ENCODE measurements at regions of chr3 and their contacts with region 1.

Region 1: GRCh38 chr3:23402728-23403492 is 199.8 kb downstream of the UBE2E2 start:
- DNase-seq: no peak
- H3K4me3 ChIP-seq: no peak overlapping the region
- H3K27ac ChIP-seq: no peak overlapping the region
- H3K4me1 ChIP-seq: no peaks in the 10 kb centered on the region
- H3K27me3 ChIP-seq: no peaks in the 10 kb centered on the region
- CTCF ChIP-seq: no peak

Region 2: GRCh38 chr3:23288286-23288685 is 114.6 kb before region 1 on chr3:
- CTCF ChIA-PET with region 1: no interaction called
- dilution Hi-C with region 1: no loop called
- in situ Hi-C with region 1: no loop called
- intact Hi-C with region 1: no loop called
- DNase-seq: peak; percentile 6
- H3K4me3 ChIP-seq: no peak overlapping the region
- H3K27ac ChIP-seq: no peak overlapping the region
- H3K4me1 ChIP-seq: no peaks in the 10 kb centered on the region
- H3K27me3 ChIP-seq: no peaks in the 10 kb centered on the region
- CTCF ChIP-seq: no peak

Region 3: GRCh38 chr3:23435318-23435717 is 32.4 kb after region 1 on chr3:
- CTCF ChIA-PET with region 1: no interaction called
- dilution Hi-C with region 1: loop called (anchors 5 kb)
- in situ Hi-C with region 1: no loop called
- intact Hi-C with region 1: no loop called
- DNase-seq: no peak
- H3K4me3 ChIP-seq: no peak overlapping the region
- H3K27ac ChIP-seq: no peak overlapping the region
- H3K4me1 ChIP-seq: no peaks in the 10 kb centered on the region
- H3K27me3 ChIP-seq: no peaks in the 10 kb centered on the region
- CTCF ChIP-seq: no peak

Measured in mammary epithelial cell (primary cell).